Activated CD4-positive, alpha-beta memory T cell treated with anti-CD3 and anti-CD28 coated beads, Interleukin-2, amount 10 ng/mL, durations not matched to agents 7 days and 5 days (primary cell): ENCODE measurements at regions of chr1 and their contacts with region 1.

Region 1: GRCh38 chr1:41683681-41684500 is 199.4 kb upstream of the EDN2 start:
- DNase-seq: peak; percentile 71
- H3K4me3 Mint-ChIP-seq: peak overlapping the region; percentile 11
- H3K27ac Mint-ChIP-seq: peak overlapping the region; percentile 87
- H3K4me1 Mint-ChIP-seq: peaks cover 98% of the 10 kb centered on the region
- H3K27me3 Mint-ChIP-seq: no peaks in the 10 kb centered on the region

Region 2: DNA sequence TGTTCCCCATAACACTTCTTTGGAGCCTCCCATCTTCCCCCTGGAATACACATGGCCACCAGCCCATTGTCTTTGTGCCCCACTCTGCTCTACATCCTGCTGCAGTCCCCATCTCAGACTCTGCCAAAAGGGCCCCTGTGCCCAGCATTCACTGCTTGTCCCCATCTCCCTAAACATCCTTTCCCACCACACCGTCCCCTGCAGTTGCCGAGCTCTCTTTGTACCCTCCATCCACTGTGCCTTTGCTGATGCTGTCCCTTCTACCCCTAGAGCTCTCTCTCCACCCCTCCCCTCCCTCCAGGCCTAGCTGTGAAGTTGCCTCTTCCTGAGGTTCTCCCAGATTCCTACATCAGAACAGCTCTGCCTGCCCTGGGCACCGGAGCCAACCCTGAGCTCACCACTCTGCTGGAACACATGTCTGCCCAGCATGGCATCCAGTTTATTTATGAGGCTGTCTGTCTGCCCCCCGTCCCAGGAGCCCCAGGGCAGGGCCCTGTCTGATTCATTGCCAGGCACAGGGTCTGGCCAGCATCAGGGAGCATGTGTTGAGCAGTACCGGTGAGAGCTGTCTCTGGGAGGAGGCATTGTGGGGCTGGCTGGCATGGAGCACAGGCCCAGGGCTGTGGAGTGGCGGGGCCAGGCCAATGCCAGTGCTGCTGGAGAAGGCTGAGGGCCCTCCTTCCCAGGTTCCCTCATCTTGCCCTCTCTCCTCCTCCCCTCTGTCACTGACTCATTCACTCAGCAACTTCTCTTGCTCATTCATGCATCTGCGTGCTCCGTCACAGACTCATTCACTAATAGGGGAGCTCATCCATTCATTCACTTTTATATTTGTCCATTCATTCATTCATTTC is 228.2 kb before region 1 on chr1:
- CTCF ChIA-PET with region 1: no interaction called
- POLR2A ChIA-PET with region 1: no interaction called
- DNase-seq: no peak
- H3K4me3 Mint-ChIP-seq: no peak overlapping the region
- H3K27ac Mint-ChIP-seq: no peak overlapping the region
- H3K4me1 Mint-ChIP-seq: no peaks in the 10 kb centered on the region
- H3K27me3 Mint-ChIP-seq: peaks cover 4% of the 10 kb centered on the region

Region 3: GRCh38 chr1:41662061-41662764 is 21.7 kb before region 1 on chr1:
- CTCF ChIA-PET with region 1: interaction called, 6 read pairs
- POLR2A ChIA-PET with region 1: interaction called, 64 read pairs
- DNase-seq: peak; percentile 84
- H3K4me3 Mint-ChIP-seq: peak overlapping the region; percentile 66
- H3K27ac Mint-ChIP-seq: peak overlapping the region; percentile 74
- H3K4me1 Mint-ChIP-seq: peaks cover 83% of the 10 kb centered on the region
- H3K27me3 Mint-ChIP-seq: no peaks in the 10 kb centered on the region

Region 4: GRCh38 chr1:41711581-41711980 is 27.7 kb after region 1 on chr1:
- CTCF ChIA-PET with region 1: no interaction called
- POLR2A ChIA-PET with region 1: no interaction called
- DNase-seq: no peak
- H3K4me3 Mint-ChIP-seq: no peak overlapping the region
- H3K27ac Mint-ChIP-seq: no peak overlapping the region
- H3K4me1 Mint-ChIP-seq: peaks cover 22% of the 10 kb centered on the region
- H3K27me3 Mint-ChIP-seq: no peaks in the 10 kb centered on the region

Region 5: DNA sequence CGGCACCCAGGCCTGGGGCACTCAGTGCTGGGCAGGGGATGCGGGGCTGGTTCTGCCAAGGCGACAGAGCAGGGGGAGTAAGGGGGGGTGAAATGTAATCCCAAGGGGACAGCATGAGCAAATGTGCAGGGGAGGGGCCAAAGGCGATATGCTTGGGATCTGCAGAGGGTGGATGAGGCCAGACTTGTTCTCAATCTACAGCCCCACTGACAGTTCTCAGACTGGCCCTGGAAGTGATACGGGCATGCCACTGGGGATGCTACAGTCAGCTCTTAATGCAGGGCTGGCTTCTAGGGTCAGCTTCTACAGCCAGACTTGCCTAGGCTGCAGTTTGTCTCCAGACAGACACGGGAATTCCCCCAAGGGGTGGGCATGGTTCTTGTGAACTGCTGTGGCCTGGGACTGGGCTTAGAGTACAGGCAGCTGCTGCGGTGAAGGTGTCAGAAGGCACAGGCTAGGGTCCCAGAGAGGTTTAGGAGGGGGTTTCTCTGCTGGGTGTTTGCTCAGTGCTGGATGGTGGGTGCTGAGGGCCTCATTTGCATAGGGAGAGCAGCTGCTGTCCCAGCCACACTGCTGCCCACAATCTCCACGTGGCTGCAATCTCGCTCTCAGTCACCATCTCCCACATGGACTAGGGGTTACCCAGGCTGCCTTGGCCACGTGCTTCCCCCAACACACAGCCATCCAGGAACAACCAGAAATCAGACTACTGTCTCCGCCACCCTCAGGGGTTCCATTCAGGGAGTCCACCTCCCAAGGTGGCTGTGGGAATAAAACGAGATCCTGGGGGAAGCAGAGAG is 44.7 kb after region 1 on chr1:
- CTCF ChIA-PET with region 1: no interaction called
- POLR2A ChIA-PET with region 1: interaction called, 15 read pairs
- DNase-seq: peak; percentile 62
- H3K4me3 Mint-ChIP-seq: no peak overlapping the region
- H3K27ac Mint-ChIP-seq: no peak overlapping the region
- H3K4me1 Mint-ChIP-seq: peaks cover 42% of the 10 kb centered on the region
- H3K27me3 Mint-ChIP-seq: no peaks in the 10 kb centered on the region

Region 6: DNA sequence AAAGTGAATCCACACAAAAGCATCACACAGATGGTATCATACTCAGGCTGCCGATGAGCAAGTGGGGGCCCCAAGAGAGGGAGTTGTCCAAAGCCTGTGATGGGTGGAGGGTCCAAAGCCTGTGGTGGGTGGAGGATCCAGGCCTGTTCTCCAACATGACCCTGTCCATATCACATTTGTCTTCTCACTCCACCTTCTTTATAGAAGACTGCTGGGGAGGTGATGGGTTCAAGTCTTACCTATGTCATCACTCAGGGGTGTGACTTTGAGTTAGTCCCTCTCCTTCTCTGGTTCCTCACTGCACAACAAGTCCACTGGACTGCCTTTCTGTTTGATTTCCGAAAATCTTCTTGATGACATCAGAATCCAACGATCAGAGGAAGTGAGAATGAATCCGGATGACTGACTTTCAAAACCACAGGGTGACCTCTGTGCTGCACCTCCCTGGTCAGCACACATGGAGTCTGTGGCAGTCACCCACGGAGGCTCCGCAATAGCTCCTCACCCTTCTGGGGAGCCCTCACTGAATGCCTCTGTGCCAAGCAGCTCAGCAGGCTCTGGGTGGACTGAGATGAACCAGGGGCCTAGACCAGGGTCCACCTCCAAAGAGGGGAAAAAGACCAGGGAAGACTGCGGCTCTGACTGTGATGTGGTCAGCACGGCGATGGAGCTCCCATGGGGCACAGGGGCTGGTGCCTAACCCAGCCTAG is 68.1 kb after region 1 on chr1:
- CTCF ChIA-PET with region 1: no interaction called
- POLR2A ChIA-PET with region 1: interaction called, 15 read pairs
- DNase-seq: no peak
- H3K4me3 Mint-ChIP-seq: no peak overlapping the region
- H3K27ac Mint-ChIP-seq: peak overlapping the region; percentile 92
- H3K4me1 Mint-ChIP-seq: peaks cover 72% of the 10 kb centered on the region
- H3K27me3 Mint-ChIP-seq: no peaks in the 10 kb centered on the region